HepG2 (cell line): ENCODE measurements at regions of chr22 and their contacts with region 1.

Region 1: GRCh38 chr22:29524440-29525191 is 28.9 kb downstream of the THOC5 start:
- DNase-seq: peak; percentile 46
- ATAC-seq: peak; percentile 96
- H3K4me3 ChIP-seq: no peak overlapping the region
- H3K27ac ChIP-seq: no peak overlapping the region
- H3K4me1 ChIP-seq: no peaks in the 10 kb centered on the region
- H3K27me3 ChIP-seq: no peaks in the 10 kb centered on the region
- CTCF ChIP-seq: peak; percentile 70
- EP300 ChIP-seq: no peak
- POLR2A ChIP-seq: no peak
- RAD21 ChIP-seq: peak; percentile 71

Region 2: GRCh38 chr22:29394931-29395581 is 129.6 kb before region 1 on chr22:
- CTCF ChIA-PET with region 1: interaction called, 13 read pairs
- POLR2A ChIA-PET with region 1: no interaction called
- in situ Hi-C with region 1: loop called (anchors 10 kb)
- intact Hi-C with region 1: loop called (anchors 1 kb)
- DNase-seq: peak; percentile 70
- ATAC-seq: peak; percentile 91
- H3K4me3 ChIP-seq: no peak overlapping the region
- H3K27ac ChIP-seq: no peak overlapping the region
- H3K4me1 ChIP-seq: peaks cover 35% of the 10 kb centered on the region
- H3K27me3 ChIP-seq: no peaks in the 10 kb centered on the region; a peak in 1 of 5 replicates
- CTCF ChIP-seq: peak; percentile 93
- EP300 ChIP-seq: no peak
- POLR2A ChIP-seq: no peak
- RAD21 ChIP-seq: peak; percentile 80

Region 3: GRCh38 chr22:29470159-29470855 is 54.3 kb before region 1 on chr22:
- CTCF ChIA-PET with region 1: interaction called, 3 read pairs
- POLR2A ChIA-PET with region 1: no interaction called
- in situ Hi-C with region 1: no loop called
- intact Hi-C with region 1: loop called (anchors 1 kb)
- DNase-seq: peak; percentile 26
- ATAC-seq: peak; percentile 92
- H3K4me3 ChIP-seq: peak overlapping the region; percentile 38 to 68 (median 40); a peak in 5 of 6 replicates
- H3K27ac ChIP-seq: no peak overlapping the region
- H3K4me1 ChIP-seq: peaks cover 11% of the 10 kb centered on the region; the same call in 1 of the 2 replicates
- H3K27me3 ChIP-seq: peaks cover 12 to 57% of the 10 kb centered on the region in 2 experiments
- CTCF ChIP-seq: peak; percentile 91
- EP300 ChIP-seq: no peak
- POLR2A ChIP-seq: no peak
- RAD21 ChIP-seq: peak; percentile 69

Region 4: DNA sequence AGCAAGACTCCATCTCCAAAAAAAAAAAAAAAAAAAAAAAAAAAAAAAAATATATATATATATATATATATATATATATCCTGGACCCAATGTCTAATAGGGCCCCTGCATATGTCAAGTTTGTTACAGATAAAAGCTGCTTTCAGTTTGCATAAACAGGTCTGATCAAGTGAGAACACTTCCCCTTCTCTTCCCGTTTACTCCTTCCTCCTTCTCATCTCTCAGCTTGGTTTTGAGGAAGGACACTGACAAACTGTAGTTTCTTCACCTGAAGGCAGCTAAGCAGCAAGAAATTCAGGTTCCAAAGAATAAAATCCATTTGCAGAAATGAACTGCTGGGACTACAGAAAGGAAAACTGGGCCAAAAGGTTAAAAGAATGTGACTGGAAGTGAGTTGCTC is 17.2 kb after region 1 on chr22:
- CTCF ChIA-PET with region 1: no interaction called
- POLR2A ChIA-PET with region 1: no interaction called
- in situ Hi-C with region 1: no loop called
- intact Hi-C with region 1: no loop called
- DNase-seq: no peak
- ATAC-seq: no peak
- H3K4me3 ChIP-seq: no peak overlapping the region
- H3K27ac ChIP-seq: no peak overlapping the region
- H3K4me1 ChIP-seq: peaks cover 5% of the 10 kb centered on the region
- H3K27me3 ChIP-seq: no peaks in the 10 kb centered on the region
- CTCF ChIP-seq: no peak
- EP300 ChIP-seq: no peak
- POLR2A ChIP-seq: no peak
- RAD21 ChIP-seq: no peak

Region 5: GRCh38 chr22:29603358-29604075 is 78.9 kb after region 1 on chr22 and contains the start of gene NF2:
- CTCF ChIA-PET with region 1: no interaction called
- POLR2A ChIA-PET with region 1: no interaction called
- in situ Hi-C with region 1: no loop called
- intact Hi-C with region 1: no loop called
- DNase-seq: peak; percentile 99
- ATAC-seq: peak; percentile 97
- H3K4me3 ChIP-seq: peak within 1 kb of the TSS; percentile 88 to 96 (median 93)
- H3K27ac ChIP-seq: peak within 1 kb of the TSS; percentile 77
- H3K4me1 ChIP-seq: peaks cover 24% of the 10 kb centered on the region
- H3K27me3 ChIP-seq: no peaks in the 10 kb centered on the region; a peak in 1 of 5 replicates
- CTCF ChIP-seq: peak; percentile 22; the same call in 1 of the 2 replicates
- EP300 ChIP-seq: no peak
- POLR2A ChIP-seq: peak; percentile 63 to 64; a peak in 3 of 4 replicates
- RAD21 ChIP-seq: no peak; the same call in none of the 2 replicates
- total RNA-seq, gene NF2: 33.3 and 45.3 TPM in 2 replicates